Right cardiac atrium (tissue), 5 donors: ENCODE measurements at regions of chr10 and their contacts with region 1.

Region 1: GRCh38 chr10:132023092-132023811 is 41.5 kb upstream of the BNIP3 start:
- DNase-seq: peak; percentile 82 to 93 (median 92)
- ATAC-seq: peak; percentile 89 to 91
- H3K4me3 ChIP-seq: peak overlapping the region; percentile 39
- H3K27ac ChIP-seq: no peak overlapping the region
- H3K4me1 ChIP-seq: no peaks in the 10 kb centered on the region
- H3K27me3 ChIP-seq: no peaks in the 10 kb centered on the region

Region 2: DNA sequence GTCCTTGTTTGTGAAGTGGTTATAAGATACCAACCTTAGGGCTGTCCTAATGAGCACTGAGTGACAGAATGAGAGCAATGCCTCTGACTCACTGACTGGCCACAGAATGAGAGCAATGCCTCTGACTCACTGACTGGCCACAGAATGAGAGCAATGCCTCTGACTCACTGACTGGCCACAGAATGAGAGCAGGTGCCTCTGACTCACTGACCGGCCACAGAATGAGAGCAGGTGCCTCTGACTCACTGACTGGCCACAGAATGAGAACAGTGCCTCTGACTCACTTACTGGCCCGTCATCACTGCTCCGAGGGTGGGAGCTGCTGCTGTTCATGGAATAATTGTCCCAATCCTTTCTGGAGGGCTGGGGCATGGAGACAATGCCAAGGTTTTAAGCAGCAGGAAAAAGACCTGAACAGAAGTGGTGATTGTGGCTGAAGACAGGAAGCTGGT is 387.7 kb before region 1 on chr10:
- intact Hi-C with region 1: no loop called
- DNase-seq: no peak
- ATAC-seq: no peak
- H3K4me3 ChIP-seq: no peak overlapping the region
- H3K27ac ChIP-seq: no peak overlapping the region
- H3K4me1 ChIP-seq: no peaks in the 10 kb centered on the region
- H3K27me3 ChIP-seq: no peaks in the 10 kb centered on the region

Region 3: DNA sequence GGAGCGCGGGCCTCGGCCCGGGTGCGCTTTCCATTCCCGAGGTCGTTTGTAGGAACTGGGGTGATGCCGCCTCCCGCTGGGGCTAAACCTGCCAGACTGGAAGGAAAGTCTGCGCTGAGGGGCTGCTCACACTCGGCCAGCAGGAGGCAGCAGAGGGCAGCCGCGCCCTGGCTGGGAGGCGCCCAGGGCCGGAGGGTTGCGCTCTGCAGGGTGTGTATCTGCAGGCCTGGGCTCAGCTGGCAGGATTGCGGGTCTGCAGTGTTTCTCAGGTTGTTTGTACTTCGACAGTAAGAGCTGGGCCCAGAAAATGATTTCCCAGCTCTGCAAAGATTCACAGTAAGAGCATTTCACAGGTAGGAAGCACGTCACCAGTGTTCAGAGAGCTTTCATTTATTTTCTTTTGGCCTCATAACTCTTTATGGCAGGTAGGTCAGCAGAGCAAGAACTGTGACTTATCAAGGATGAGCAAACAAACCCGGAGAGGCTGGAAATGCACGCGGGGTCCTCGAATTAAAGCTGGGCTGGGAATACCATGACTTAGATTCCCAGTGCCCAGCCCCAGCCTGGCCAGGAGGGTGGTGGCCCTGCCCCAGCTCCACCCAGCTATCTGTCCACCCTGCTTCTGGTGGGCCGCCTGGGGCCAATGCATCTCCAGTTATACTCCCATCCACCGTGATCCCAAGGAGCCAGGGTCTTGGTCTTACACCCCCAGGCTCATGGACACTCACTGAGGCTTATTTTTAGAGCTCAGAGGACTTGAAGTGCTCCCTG is 137.7 kb before region 1 on chr10:
- intact Hi-C with region 1: loop called (anchors 1 to 5 kb)
- DNase-seq: peak; percentile 70 to 91 (median 90)
- ATAC-seq: peak; percentile 94 to 97
- H3K4me3 ChIP-seq: no peak overlapping the region
- H3K27ac ChIP-seq: no peak overlapping the region
- H3K4me1 ChIP-seq: no peaks in the 10 kb centered on the region
- H3K27me3 ChIP-seq: no peaks in the 10 kb centered on the region